OCI-LY7 (cell line): ENCODE measurements at regions of chr16 and their contacts with region 1.

Region 1: GRCh38 chr16:75789237-75789636 is 62.9 kb upstream of the CPHXL start:
- DNase-seq: peak; percentile 70
- H3K4me3 ChIP-seq: no peak overlapping the region
- H3K27ac ChIP-seq: no peak overlapping the region
- H3K4me1 ChIP-seq: peaks cover 19% of the 10 kb centered on the region
- CTCF ChIP-seq: peak; percentile 97

Region 2: DNA sequence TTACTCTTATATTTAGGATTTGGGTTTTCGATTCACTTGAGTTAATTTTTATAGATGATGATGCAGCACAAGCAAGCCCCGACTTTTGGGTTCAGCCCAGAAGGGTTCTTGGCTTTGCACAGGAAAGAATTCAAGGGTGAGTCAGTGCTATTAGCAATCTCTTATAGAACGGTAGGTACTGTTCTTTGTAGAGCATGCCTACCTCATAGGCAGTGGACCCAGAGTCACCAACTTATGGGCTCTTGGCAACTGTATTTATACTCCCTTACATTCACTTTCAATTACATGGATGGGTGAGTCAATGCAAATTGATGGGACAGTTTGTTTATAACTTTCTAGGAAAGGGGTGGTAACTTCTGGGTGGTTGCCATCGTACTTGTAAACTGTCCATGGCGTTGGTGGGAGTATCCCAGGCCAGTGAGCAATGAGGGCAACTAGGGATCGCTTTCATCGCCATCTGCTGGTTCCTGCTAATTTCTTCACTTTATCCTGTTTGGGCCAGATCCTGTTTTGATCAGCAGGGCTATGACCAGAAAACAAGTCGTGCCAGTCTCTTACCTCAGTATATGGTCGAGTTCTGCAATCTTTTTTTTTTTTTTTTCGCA is 850.5 kb after region 1 on chr16:
- CTCF ChIA-PET with region 1: no interaction called
- POLR2A ChIA-PET with region 1: no interaction called
- intact Hi-C with region 1: loop called (anchors 10 kb)
- DNase-seq: peak; percentile 12
- H3K4me3 ChIP-seq: no peak overlapping the region
- H3K27ac ChIP-seq: no peak overlapping the region
- H3K4me1 ChIP-seq: no peaks in the 10 kb centered on the region
- CTCF ChIP-seq: peak; percentile 73